OCI-LY7 (cell line): ENCODE measurements at regions of chr12 and their contacts with region 1.

Region 1: DNA sequence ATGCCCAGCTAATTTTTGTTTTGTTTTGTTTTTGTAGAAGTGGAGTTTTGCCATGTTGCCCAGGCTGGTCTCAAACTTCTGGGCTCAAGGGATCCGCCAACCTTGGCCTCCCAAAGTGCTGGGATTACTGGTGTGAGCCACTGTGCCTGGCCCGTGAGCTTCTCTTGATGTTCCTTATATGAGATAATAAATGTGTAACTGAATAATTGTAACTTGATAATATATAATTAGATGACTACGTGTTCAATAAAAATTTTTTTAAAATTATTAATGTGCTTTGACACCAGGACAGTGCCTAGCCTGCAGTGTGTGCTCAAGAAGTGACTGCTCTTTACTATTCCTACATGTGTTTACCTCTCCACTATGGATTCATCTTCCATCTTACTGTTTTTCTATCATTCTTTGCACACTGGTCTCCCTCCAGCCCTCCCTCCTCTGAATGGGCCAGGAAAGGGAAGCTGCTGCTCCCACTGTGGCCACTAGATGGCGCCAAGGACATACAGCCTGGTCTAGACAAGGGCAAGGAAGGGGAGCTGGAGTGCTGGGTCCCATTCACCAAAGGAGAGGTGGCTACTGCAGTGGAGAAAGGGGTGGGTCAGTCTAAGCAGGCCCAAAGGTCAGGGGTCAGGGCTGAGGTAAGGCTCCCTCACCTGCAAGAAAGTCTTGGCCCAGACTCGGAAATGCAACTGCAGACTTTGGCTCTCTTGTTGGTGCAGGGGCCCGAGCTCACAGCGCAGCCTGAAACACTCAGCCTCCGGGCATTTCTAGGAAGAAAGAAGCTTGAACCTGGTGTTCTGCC is 14.7 kb upstream of the ZNF385A start:
- DNase-seq: peak; percentile 76
- H3K4me3 ChIP-seq: no peak overlapping the region
- H3K27ac ChIP-seq: no peak overlapping the region
- H3K4me1 ChIP-seq: peaks cover under 1% of the 10 kb centered on the region
- CTCF ChIP-seq: peak; percentile 99

Region 2: GRCh38 chr12:54285150-54286041 is 113.8 kb before region 1 on chr12:
- CTCF ChIA-PET with region 1: no interaction called
- POLR2A ChIA-PET with region 1: no interaction called
- intact Hi-C with region 1: no loop called
- DNase-seq: no peak
- H3K4me3 ChIP-seq: peak overlapping the region; percentile 36
- H3K27ac ChIP-seq: peak overlapping the region; percentile 16
- H3K4me1 ChIP-seq: peaks cover 52% of the 10 kb centered on the region
- CTCF ChIP-seq: peak; percentile 69

Region 3: GRCh38 chr12:54368709-54369583 is 30.2 kb before region 1 on chr12:
- CTCF ChIA-PET with region 1: interaction called, 3 read pairs
- POLR2A ChIA-PET with region 1: no interaction called
- intact Hi-C with region 1: loop called (anchors 1 kb)
- DNase-seq: peak; percentile 90
- H3K4me3 ChIP-seq: peak overlapping the region; percentile 27
- H3K27ac ChIP-seq: no peak overlapping the region
- H3K4me1 ChIP-seq: peaks cover 24% of the 10 kb centered on the region
- CTCF ChIP-seq: peak; percentile 96

Region 4: GRCh38 chr12:54411391-54412241 is 12.4 kb after region 1 on chr12:
- CTCF ChIA-PET with region 1: interaction called, 10 read pairs
- POLR2A ChIA-PET with region 1: interaction called, 3 read pairs
- intact Hi-C with region 1: no loop called
- DNase-seq: peak; percentile 57
- H3K4me3 ChIP-seq: no peak overlapping the region
- H3K27ac ChIP-seq: no peak overlapping the region
- H3K4me1 ChIP-seq: peaks cover 33% of the 10 kb centered on the region
- CTCF ChIP-seq: no peak

Region 5: DNA sequence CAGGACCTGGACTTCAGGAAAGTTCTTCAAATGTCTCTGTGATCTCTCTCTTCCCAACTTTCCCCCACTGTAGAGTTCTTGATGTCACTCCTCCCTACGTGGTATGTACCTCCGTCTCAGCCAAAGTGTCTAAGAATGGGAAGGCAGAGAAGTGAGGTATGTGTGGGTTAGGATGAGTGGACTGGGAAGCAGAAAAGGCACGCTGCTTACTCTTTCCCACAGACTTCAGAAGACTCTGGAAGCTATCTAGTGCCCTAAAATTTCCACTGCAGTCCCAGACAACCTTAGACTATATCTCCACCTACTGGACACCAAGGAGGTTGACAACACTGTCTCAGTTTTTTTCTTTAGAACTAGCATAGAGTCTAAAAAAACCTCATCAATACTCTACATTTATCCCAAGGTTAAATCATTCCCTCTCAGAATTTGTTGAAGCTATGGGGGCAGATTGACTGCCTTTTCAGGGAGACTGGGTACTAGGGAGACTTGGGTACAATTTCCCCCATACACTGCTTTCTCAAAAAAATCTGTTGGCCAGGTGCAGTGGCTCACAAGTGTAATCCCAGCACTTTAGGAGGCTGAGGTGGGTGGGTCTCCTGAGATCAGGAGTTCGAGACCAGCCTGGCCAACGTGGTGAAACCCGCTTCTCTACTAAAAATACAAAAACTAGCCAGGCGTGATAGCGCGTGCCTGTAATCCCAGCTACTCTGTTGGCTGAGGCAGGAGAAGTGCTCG is 40.5 kb after region 1 on chr12:
- CTCF ChIA-PET with region 1: interaction called, 28 read pairs
- POLR2A ChIA-PET with region 1: interaction called, 6 read pairs
- intact Hi-C with region 1: loop called (anchors 1 kb)
- DNase-seq: peak; percentile 64
- H3K4me3 ChIP-seq: no peak overlapping the region
- H3K27ac ChIP-seq: no peak overlapping the region
- H3K4me1 ChIP-seq: no peaks in the 10 kb centered on the region
- CTCF ChIP-seq: peak; percentile 94

Region 6: GRCh38 chr12:54475537-54475936 is 76.3 kb after region 1 on chr12:
- CTCF ChIA-PET with region 1: no interaction called
- POLR2A ChIA-PET with region 1: no interaction called
- intact Hi-C with region 1: no loop called
- DNase-seq: no peak
- H3K4me3 ChIP-seq: no peak overlapping the region
- H3K27ac ChIP-seq: no peak overlapping the region
- H3K4me1 ChIP-seq: peaks cover 31% of the 10 kb centered on the region
- CTCF ChIP-seq: no peak